Activated CD4-positive, alpha-beta T cell treated with anti-CD3 and anti-CD28 coated beads for 36 hours (primary cell): ENCODE measurements at regions of chr17 and their contacts with region 1.

Region 1: GRCh38 chr17:17237026-17237799 is at the start of gene FLCN:
- DNase-seq: peak; percentile 93
- ATAC-seq: peak; percentile 90
- H3K4me3 Mint-ChIP-seq: peak within 1 kb of the TSS; percentile 81
- H3K27ac Mint-ChIP-seq: peak within 1 kb of the TSS; percentile 98
- H3K4me1 Mint-ChIP-seq: peaks cover 31% of the 10 kb centered on the region
- H3K27me3 Mint-ChIP-seq: no peaks in the 10 kb centered on the region
- total RNA-seq, gene FLCN: 12.3 to 18.8 TPM

Region 2: GRCh38 chr17:16973760-16974540 is 263.3 kb before region 1 on chr17:
- CTCF ChIA-PET with region 1: no interaction called
- POLR2A ChIA-PET with region 1: no interaction called
- intact Hi-C with region 1: no loop called
- DNase-seq: no peak
- ATAC-seq: no peak
- H3K4me3 Mint-ChIP-seq: no peak overlapping the region
- H3K27ac Mint-ChIP-seq: no peak overlapping the region
- H3K4me1 Mint-ChIP-seq: peaks cover 13% of the 10 kb centered on the region
- H3K27me3 Mint-ChIP-seq: no peaks in the 10 kb centered on the region

Region 3: DNA sequence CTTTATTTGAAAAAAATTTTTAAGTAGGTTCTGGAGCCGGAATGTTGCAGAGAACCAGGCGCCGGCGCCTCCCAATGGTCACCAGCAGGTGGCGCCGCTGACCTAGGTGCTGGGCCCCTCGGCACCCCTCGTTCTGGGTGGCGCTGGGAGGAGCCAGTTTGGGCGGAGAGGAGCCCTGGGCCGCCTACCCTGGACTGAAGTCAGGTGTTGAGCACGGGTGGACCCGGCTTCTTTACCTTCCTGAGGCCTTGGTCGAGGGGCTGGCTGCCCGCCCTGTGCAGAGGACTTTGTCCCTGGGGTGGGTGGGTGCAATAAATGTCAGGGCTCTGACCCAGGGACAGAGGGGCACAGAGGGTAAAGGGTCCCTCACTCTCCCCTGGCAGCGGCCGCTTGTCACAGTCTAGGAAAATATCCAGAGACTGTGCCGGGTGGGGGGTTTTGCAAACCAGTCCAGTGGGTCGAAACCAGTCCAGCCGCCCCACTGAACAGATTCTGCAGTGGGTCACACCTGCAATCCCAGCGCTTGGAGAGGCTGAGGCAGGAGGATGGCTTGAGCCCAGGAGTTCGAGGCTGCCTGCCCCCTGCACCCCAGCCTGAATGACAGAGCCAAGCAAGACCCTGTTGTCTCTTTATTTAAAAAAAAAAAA is 235.2 kb before region 1 on chr17:
- CTCF ChIA-PET with region 1: no interaction called
- POLR2A ChIA-PET with region 1: no interaction called
- intact Hi-C with region 1: loop called (anchors 5 to 10 kb)
- DNase-seq: peak; percentile 88
- ATAC-seq: peak; percentile 98
- H3K4me3 Mint-ChIP-seq: no peak overlapping the region
- H3K27ac Mint-ChIP-seq: no peak overlapping the region
- H3K4me1 Mint-ChIP-seq: no peaks in the 10 kb centered on the region
- H3K27me3 Mint-ChIP-seq: no peaks in the 10 kb centered on the region

Region 4: GRCh38 chr17:17141860-17142552 is 95.2 kb before region 1 on chr17:
- CTCF ChIA-PET with region 1: interaction called, 10 read pairs
- POLR2A ChIA-PET with region 1: no interaction called
- intact Hi-C with region 1: no loop called
- DNase-seq: peak; percentile 76
- ATAC-seq: peak; percentile 59
- H3K4me3 Mint-ChIP-seq: no peak overlapping the region
- H3K27ac Mint-ChIP-seq: peak overlapping the region; percentile 72
- H3K4me1 Mint-ChIP-seq: peaks cover 17% of the 10 kb centered on the region
- H3K27me3 Mint-ChIP-seq: no peaks in the 10 kb centered on the region

Region 5: DNA sequence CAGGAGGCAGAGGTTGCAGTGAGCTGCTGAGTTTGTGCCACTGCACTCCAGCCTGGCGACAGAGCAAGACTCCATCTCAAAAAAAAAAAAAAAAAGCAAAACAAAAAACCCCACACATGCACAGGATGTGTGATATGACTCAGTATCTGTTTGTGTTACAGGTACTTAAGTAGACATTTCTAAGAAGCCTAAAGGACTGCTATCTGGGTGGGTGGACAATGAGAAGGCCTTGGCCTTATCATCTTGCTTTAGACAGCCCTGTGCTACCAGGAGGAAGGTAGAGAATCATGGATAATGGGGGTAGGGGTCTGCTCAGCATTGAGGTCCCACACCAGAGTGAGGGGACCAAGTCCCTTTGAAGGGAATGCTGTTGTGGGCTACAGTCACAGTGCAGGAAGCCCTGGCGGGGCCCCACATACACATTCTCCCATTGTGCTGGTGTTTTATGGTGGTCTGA is 57.8 kb before region 1 on chr17:
- CTCF ChIA-PET with region 1: interaction called, 3 read pairs
- POLR2A ChIA-PET with region 1: no interaction called
- intact Hi-C with region 1: loop called in 1 of 2 experiments (anchors 2 kb)
- DNase-seq: peak; percentile 35
- ATAC-seq: peak; percentile 65
- H3K4me3 Mint-ChIP-seq: peak overlapping the region; percentile 51
- H3K27ac Mint-ChIP-seq: peak overlapping the region; percentile 97
- H3K4me1 Mint-ChIP-seq: peaks cover 93% of the 10 kb centered on the region
- H3K27me3 Mint-ChIP-seq: no peaks in the 10 kb centered on the region

Region 6: GRCh38 chr17:17280613-17281549 is 43.7 kb after region 1 on chr17 and contains the start of gene COPS3:
- CTCF ChIA-PET with region 1: interaction called, 3 read pairs
- POLR2A ChIA-PET with region 1: interaction called, 5 read pairs
- intact Hi-C with region 1: loop called (anchors 1 to 2 kb)
- DNase-seq: peak; percentile 99
- ATAC-seq: peak; percentile 94
- H3K4me3 Mint-ChIP-seq: peak within 1 kb of the TSS; percentile 92
- H3K27ac Mint-ChIP-seq: peak within 1 kb of the TSS; percentile 95
- H3K4me1 Mint-ChIP-seq: peaks cover 41% of the 10 kb centered on the region
- H3K27me3 Mint-ChIP-seq: no peaks in the 10 kb centered on the region
- total RNA-seq, gene COPS3: 79.6 to 83.1 TPM

Region 7: GRCh38 chr17:17476865-17477467 is 239.8 kb after region 1 on chr17 and contains the start of gene MED9:
- CTCF ChIA-PET with region 1: no interaction called
- POLR2A ChIA-PET with region 1: no interaction called
- intact Hi-C with region 1: loop called in 1 of 2 experiments (anchors 1 kb)
- DNase-seq: peak; percentile 97
- ATAC-seq: peak; percentile 94
- H3K4me3 Mint-ChIP-seq: peak within 1 kb of the TSS; percentile 94
- H3K27ac Mint-ChIP-seq: peak within 1 kb of the TSS; percentile 84
- H3K4me1 Mint-ChIP-seq: peaks cover 44% of the 10 kb centered on the region
- H3K27me3 Mint-ChIP-seq: no peaks in the 10 kb centered on the region
- total RNA-seq, gene MED9: 12.2 to 14.3 TPM